ENCODE measurements at regions of chr1 and their contacts with region 1.

Region 1: DNA sequence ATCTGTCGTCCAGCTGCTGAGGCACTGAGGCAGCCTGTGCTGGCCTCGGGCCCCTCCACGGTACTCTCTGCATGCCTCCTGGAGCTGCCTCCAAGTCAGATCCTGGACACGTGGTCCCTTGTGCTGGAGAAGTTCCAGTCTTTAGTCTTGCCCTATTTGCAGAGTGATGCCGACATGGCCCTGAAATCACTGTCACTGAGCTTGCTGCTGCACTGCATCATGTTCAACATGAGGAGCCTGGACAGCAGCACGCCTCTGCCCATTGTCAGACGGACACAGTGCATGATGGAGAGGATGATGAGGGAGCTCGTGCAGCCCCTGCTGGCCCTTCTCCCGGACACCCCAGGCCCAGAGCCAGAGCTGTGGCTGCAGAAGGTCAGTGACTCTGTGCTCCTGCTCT is 10.0 kb downstream of the URB2 start:
- DNase-seq: no peak
- ATAC-seq: no peak
- H3K4me3 ChIP-seq: no peak overlapping the region
- H3K27ac ChIP-seq: no peak overlapping the region
- H3K4me1 ChIP-seq: no peaks in the 10 kb centered on the region
- H3K27me3 ChIP-seq: no peaks in the 10 kb centered on the region
- CTCF ChIP-seq: no peak

Region 2: DNA sequence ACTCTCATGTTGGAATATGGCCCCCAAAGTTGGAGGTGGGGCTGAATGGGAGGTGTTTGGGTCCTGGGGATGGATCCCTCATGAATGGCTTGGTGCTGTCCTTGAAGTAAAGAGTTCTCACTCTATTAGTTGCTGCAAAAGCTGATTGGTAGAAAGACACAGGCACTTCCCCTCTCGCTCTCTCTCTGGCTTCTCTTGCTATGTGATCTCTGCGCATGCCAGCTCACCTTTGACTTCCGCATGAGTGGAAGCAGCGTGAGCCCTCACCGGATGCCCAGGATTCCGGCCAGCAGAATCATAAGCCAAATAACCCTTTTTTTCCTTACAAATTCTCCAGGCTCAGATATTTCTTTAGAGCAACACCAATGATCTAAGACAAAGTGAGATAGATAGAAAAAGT is 272.3 kb before region 1 on chr1:
- CTCF ChIA-PET with region 1: no interaction called
- POLR2A ChIA-PET with region 1: no interaction called
- in situ Hi-C with region 1: no loop called
- intact Hi-C with region 1: no loop called
- DNase-seq: no peak
- ATAC-seq: no peak
- H3K4me3 ChIP-seq: no peak overlapping the region
- H3K27ac ChIP-seq: no peak overlapping the region
- H3K4me1 ChIP-seq: no peaks in the 10 kb centered on the region
- H3K27me3 ChIP-seq: peaks cover 13% of the 10 kb centered on the region
- CTCF ChIP-seq: no peak

Region 3: GRCh38 chr1:229578168-229579058 is 57.6 kb before region 1 on chr1:
- CTCF ChIA-PET with region 1: no interaction called
- POLR2A ChIA-PET with region 1: interaction called, 12 read pairs
- in situ Hi-C with region 1: no loop called
- intact Hi-C with region 1: no loop called
- DNase-seq: no peak
- ATAC-seq: no peak
- H3K4me3 ChIP-seq: no peak overlapping the region
- H3K27ac ChIP-seq: no peak overlapping the region
- H3K4me1 ChIP-seq: no peaks in the 10 kb centered on the region
- H3K27me3 ChIP-seq: no peaks in the 10 kb centered on the region
- CTCF ChIP-seq: no peak

Region 4: DNA sequence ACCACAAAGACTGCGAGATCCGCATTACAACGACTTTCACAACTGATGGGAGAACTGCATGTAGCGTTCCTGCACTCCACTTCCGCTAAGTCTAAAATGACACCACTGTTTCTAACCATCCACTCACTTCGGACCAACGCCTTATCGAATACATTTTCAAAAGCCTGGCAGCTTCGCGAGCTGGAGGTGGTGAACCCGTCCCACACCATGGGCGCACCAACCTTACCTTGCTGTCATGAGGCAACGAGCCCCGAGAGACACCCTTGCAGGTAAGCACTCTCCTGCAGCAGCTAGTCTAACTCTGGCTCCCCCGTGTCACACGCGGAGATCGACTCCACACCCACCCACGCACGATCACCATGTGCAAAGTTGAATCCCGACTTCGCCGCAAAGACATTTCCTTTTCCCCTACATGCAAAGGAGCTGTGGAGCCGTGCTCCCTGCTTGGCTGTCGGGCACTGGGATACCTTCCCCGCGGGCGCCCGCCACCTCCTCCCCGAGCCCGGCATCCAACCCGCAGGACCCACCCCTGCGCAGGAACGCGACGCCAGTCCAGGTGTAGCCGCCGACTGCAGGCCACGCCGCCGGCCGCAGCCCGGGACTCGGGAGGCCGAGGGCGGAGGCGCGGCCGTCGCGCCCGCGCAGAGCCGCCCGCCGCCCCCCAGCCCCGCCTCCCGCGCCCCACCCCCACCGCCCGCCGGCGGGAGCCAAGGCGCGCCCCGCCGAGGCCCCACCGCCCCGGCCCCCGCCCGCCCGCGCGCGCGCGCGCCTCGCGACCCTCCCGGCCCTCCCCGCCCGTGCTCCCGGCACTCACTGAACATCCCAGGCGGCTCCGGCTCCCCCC is 10.7 kb before region 1 on chr1:
- CTCF ChIA-PET with region 1: no interaction called
- POLR2A ChIA-PET with region 1: no interaction called
- in situ Hi-C with region 1: no loop called
- intact Hi-C with region 1: no loop called
- DNase-seq: no peak
- ATAC-seq: peak; percentile 73
- H3K4me3 ChIP-seq: peak overlapping the region; percentile 79 to 100
- H3K27ac ChIP-seq: peak overlapping the region; percentile 71
- H3K4me1 ChIP-seq: peaks cover 20% of the 10 kb centered on the region
- H3K27me3 ChIP-seq: no peaks in the 10 kb centered on the region
- CTCF ChIP-seq: no peak

Region 5: GRCh38 chr1:229710746-229711145 is 74.7 kb after region 1 on chr1:
- CTCF ChIA-PET with region 1: no interaction called
- POLR2A ChIA-PET with region 1: no interaction called
- in situ Hi-C with region 1: no loop called
- intact Hi-C with region 1: no loop called
- DNase-seq: no peak
- ATAC-seq: no peak
- H3K4me3 ChIP-seq: no peak overlapping the region
- H3K27ac ChIP-seq: no peak overlapping the region
- H3K4me1 ChIP-seq: no peaks in the 10 kb centered on the region
- H3K27me3 ChIP-seq: no peaks in the 10 kb centered on the region
- CTCF ChIP-seq: peak; percentile 15; the same call in 1 of the 2 replicates